Mammary epithelial cell (primary cell): ENCODE measurements at regions of chr20 and their contacts with region 1.

Region 1: GRCh38 chr20:36700438-36700837 is 45.5 kb downstream of the NDRG3 start:
- DNase-seq: no peak
- H3K4me3 ChIP-seq: no peak overlapping the region
- H3K27ac ChIP-seq: no peak overlapping the region
- H3K4me1 ChIP-seq: no peaks in the 10 kb centered on the region
- H3K27me3 ChIP-seq: no peaks in the 10 kb centered on the region
- CTCF ChIP-seq: no peak

Region 2: DNA sequence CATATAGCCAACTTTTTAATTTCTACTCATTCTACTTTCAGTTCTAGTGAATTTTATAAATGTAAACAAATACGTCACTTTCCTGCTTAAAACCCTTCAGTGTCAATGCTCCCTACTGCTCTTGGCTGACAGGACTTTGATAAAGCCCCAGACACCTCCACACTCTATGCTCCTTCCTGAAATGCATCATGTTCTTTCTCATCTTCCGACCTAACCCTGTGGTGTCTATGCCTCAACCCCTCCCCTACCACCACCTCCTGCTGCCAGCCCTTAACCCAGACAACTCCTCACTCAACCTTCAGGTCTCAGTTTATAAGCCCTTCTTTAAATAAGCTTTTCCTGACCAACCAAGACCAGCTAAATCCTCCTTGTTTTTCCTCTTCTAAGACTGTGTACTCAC is 194.6 kb after region 1 on chr20:
- CTCF ChIA-PET with region 1: no interaction called
- dilution Hi-C with region 1: loop called (anchors 10 kb)
- in situ Hi-C with region 1: no loop called
- intact Hi-C with region 1: no loop called
- DNase-seq: no peak
- H3K4me3 ChIP-seq: no peak overlapping the region
- H3K27ac ChIP-seq: no peak overlapping the region
- H3K4me1 ChIP-seq: no peaks in the 10 kb centered on the region
- H3K27me3 ChIP-seq: no peaks in the 10 kb centered on the region
- CTCF ChIP-seq: no peak